ENCODE measurements at regions of chr12 and their contacts with region 1.

Region 1: DNA sequence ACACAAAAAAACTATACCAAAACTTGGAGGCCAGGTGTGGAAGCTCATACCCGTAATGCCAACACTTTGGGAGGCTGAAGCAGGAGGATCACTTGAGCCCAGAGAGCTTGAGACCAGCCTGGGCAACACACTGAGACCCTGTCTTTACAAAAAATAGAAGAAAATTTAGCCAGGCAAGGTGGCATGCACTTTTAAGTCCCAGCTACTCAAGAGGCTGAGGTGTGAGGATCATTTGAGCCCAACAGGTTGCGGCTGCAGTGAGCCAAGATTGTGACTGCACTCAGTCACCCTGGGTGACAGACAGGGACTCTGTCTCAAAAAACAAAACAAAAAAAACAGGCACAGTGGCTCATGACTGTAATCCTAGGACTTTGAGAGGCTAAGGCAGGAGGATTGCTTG is 75.4 kb downstream of the RNF34 start:
- DNase-seq: no peak
- H3K4me3 ChIP-seq: no peak overlapping the region
- H3K4me3 Mint-ChIP-seq: no peak overlapping the region
- H3K27ac Mint-ChIP-seq: no peak overlapping the region
- H3K4me1 ChIP-seq: no peaks in the 10 kb centered on the region
- H3K4me1 Mint-ChIP-seq: no peaks in the 10 kb centered on the region
- H3K27me3 ChIP-seq: no peaks in the 10 kb centered on the region
- H3K27me3 Mint-ChIP-seq: no peaks in the 10 kb centered on the region
- CTCF ChIP-seq: no peak

Region 2: DNA sequence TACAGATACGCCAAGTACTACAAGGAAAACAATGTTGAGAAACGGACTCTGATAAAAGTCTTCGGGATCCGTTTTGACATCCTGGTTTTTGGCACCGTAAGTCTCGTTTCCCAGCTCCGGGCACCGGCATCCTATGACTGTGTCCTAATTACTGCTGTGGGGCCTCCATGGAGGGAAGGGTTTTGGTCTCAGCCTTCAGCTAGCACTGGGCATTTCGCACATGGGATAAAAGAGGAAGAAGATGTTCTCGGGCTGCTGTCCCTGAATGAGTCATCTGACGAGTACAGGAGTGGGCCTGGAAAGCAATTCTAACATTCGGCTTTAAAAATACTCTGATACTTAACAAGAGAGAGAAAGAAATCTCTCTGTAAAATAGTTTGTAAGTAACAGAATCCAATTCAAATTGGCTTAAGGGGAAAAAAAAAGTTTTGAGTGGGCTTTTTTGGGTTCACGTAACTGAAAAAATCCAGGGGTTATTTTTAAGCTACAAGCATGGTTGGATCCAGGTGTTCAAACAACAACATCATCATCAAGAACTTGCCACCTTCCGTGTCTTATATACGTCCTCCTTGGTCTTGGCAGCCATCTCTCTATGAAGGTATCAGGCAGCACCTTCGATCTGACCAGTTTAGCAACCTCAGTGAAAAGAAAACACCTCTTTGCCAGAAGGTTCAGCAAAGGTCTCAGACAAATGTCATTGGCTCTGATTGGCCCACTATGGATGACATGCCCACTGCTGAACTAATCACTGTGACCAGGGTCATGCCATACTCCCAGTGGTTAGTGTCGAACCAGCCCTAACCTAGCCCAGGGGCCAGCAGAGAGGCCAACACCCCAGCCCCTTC is 299.7 kb before region 1 on chr12:
- CTCF ChIA-PET with region 1: no interaction called
- POLR2A ChIA-PET with region 1: interaction called, 12 read pairs
- intact Hi-C with region 1: no loop called
- DNase-seq: no peak
- H3K4me3 ChIP-seq: no peak overlapping the region
- H3K4me3 Mint-ChIP-seq: no peak overlapping the region
- H3K27ac Mint-ChIP-seq: no peak overlapping the region
- H3K4me1 ChIP-seq: peaks cover 4% of the 10 kb centered on the region; the same call in 1 of the 2 replicates
- H3K4me1 Mint-ChIP-seq: no peaks in the 10 kb centered on the region
- H3K27me3 ChIP-seq: no peaks in the 10 kb centered on the region
- H3K27me3 Mint-ChIP-seq: no peaks in the 10 kb centered on the region
- CTCF ChIP-seq: no peak

Measured in Caco-2 (cell line).